Activated CD8-positive, alpha-beta memory T cell treated with anti-CD3 and anti-CD28 coated beads, Interleukin-2, amount 10 ng/mL, durations not matched to agents 7 days and 5 days (primary cell): ENCODE measurements at regions of chr3 and their contacts with region 1.

Region 1: GRCh38 chr3:170414202-170414663 is 4.4 kb upstream of the CLDN11 start:
- DNase-seq: peak; percentile 54
- ATAC-seq: no peak
- H3K4me3 Mint-ChIP-seq: no peak overlapping the region
- H3K27ac Mint-ChIP-seq: no peak overlapping the region
- H3K4me1 Mint-ChIP-seq: peaks cover 9% of the 10 kb centered on the region
- H3K27me3 Mint-ChIP-seq: peaks cover 29% of the 10 kb centered on the region

Region 2: DNA sequence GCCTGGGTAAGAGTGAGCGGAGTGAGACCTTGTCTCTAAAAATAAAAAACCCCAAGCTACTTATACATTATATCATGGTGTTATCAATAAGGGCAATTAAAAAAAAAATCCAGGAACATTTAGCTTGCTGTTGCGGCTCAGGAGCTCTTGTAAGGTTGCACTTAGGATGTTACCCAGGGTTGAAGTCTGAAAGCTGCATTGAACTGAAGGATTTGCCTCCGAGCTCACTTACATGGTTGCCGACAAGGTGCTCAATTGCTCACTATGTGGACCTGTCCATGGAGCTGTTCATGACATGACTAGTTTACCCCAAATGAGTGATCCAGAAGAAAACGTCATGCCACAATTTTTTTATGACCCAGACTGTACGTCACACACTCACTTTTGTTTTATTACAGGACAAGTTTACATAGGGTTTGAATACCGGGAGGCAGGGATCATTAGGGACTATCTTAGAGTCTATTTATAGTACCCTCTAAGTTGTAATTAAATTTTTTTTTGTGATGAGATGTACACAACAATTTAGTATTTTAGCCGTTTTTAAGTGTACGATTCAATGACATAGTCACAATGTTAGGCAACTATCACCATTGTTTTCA is 16.6 kb before region 1 on chr3:
- CTCF ChIA-PET with region 1: interaction called, 11 read pairs
- DNase-seq: no peak
- ATAC-seq: no peak
- H3K4me3 Mint-ChIP-seq: no peak overlapping the region
- H3K27ac Mint-ChIP-seq: no peak overlapping the region
- H3K4me1 Mint-ChIP-seq: no peaks in the 10 kb centered on the region
- H3K27me3 Mint-ChIP-seq: no peaks in the 10 kb centered on the region

Region 3: DNA sequence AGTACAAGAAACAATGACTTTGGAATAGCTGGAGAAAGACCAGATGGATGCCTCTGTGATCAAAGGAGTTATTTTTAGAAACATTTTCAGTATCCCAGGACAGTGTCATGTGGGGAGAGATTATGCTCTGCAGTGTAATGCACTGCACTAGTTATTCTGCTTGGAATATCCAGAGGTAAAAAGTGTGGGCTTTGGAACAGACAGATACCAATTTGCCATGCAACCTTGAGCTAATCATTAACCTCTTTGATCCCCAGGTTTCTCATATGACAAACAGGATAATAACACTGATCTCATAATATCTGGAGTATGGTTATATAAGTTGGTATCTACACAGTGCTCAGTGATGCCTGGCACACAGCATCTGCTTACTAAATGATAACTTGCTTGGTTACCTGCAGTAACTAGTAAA is 183.9 kb after region 1 on chr3:
- CTCF ChIA-PET with region 1: no interaction called
- DNase-seq: no peak
- ATAC-seq: no peak
- H3K4me3 Mint-ChIP-seq: no peak overlapping the region
- H3K27ac Mint-ChIP-seq: no peak overlapping the region
- H3K4me1 Mint-ChIP-seq: no peaks in the 10 kb centered on the region
- H3K27me3 Mint-ChIP-seq: peaks cover 25% of the 10 kb centered on the region

Region 4: GRCh38 chr3:170811928-170812591 is 397.8 kb after region 1 on chr3:
- CTCF ChIA-PET with region 1: interaction called, 83 read pairs
- DNase-seq: peak; percentile 77
- ATAC-seq: peak; percentile 72
- H3K4me3 Mint-ChIP-seq: no peak overlapping the region
- H3K27ac Mint-ChIP-seq: no peak overlapping the region
- H3K4me1 Mint-ChIP-seq: no peaks in the 10 kb centered on the region
- H3K27me3 Mint-ChIP-seq: peaks cover 5% of the 10 kb centered on the region